Activated CD4-positive, alpha-beta T cell treated with anti-CD3 and anti-CD28 coated beads for 36 hours (primary cell): ENCODE measurements at regions of chrX and their contacts with region 1.

Region 1: GRCh38 chrX:21374163-21374993 is at the start of gene CNKSR2:
- DNase-seq: peak; percentile 83
- ATAC-seq: peak; percentile 81
- H3K4me3 Mint-ChIP-seq: peak within 1 kb of the TSS; percentile 87
- H3K27ac Mint-ChIP-seq: peak within 1 kb of the TSS; percentile 74
- H3K4me1 Mint-ChIP-seq: peaks cover 31% of the 10 kb centered on the region
- H3K27me3 Mint-ChIP-seq: no peaks in the 10 kb centered on the region
- total RNA-seq, gene CNKSR2: 6.2 to 7.3 TPM

Region 2: DNA sequence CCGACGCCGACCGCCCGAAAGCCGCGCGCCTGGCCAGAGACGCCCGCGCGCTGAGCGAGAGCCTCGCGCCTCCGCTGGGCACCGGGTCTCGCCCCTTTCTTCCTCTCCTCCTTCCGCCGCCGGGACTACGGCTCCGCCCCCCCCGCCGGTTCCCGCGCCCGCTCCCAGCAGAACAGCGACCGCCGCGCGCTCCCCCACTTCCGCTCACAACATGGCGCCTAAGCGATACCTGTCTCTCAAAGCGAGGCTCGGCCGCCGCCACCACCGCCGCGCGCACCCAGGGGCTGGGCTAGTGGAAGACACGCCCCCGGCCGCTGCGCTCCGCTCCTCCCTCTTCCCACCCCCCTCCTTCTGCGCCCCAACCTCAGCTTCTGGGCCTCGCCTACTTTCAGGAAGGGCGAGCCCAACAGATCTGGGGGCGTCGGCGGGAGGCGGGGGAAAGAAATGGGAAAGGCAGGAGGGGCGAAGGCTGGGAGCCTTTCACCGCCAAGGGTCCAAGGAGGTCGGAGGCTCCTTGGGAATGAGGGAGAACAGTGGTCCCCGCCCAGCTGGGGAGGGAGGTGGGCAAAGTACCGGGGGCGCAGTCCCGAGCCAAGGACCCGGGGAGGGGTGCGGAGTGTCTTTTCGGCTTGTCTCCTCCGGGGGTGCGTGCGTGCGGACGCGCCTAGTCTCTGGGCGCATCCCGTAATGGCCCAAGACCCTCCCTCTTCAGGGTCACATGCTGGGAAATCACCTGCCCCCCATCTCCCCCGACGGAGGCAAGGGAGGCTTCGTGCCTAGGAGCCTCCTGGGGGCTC is 1107.4 kb before region 1 on chrX and contains the start of gene RPS6KA3:
- CTCF ChIA-PET with region 1: no interaction called
- POLR2A ChIA-PET with region 1: no interaction called
- intact Hi-C with region 1: loop called (anchors 10 kb)
- DNase-seq: peak; percentile 94
- ATAC-seq: peak; percentile 83
- H3K4me3 Mint-ChIP-seq: peak within 1 kb of the TSS; percentile 82
- H3K27ac Mint-ChIP-seq: peak within 1 kb of the TSS; percentile 91
- H3K4me1 Mint-ChIP-seq: peaks cover 18% of the 10 kb centered on the region
- H3K27me3 Mint-ChIP-seq: no peaks in the 10 kb centered on the region
- total RNA-seq, gene RPS6KA3: 40.7 to 41.5 TPM

Region 3: DNA sequence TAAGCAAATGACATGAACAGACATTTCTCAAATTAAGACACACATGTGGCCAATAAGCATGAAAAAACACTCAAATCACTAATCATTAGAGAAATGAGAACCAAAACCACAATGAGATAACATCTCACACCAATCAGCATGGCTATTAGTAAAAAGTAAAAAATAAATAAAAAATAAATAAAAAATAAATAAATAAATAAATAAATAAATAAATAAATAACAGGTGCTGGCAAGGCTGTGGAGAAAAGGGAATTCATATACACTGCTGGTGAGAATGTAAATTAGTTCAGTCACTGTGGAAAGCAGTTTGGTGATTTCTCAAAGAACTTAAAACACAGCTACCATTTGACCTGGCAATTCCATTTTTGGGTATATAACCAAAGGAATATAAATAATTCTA is 167.3 kb before region 1 on chrX:
- CTCF ChIA-PET with region 1: no interaction called
- POLR2A ChIA-PET with region 1: no interaction called
- intact Hi-C with region 1: no loop called
- DNase-seq: no peak
- ATAC-seq: no peak
- H3K4me3 Mint-ChIP-seq: no peak overlapping the region
- H3K27ac Mint-ChIP-seq: no peak overlapping the region
- H3K4me1 Mint-ChIP-seq: no peaks in the 10 kb centered on the region
- H3K27me3 Mint-ChIP-seq: no peaks in the 10 kb centered on the region

Region 4: DNA sequence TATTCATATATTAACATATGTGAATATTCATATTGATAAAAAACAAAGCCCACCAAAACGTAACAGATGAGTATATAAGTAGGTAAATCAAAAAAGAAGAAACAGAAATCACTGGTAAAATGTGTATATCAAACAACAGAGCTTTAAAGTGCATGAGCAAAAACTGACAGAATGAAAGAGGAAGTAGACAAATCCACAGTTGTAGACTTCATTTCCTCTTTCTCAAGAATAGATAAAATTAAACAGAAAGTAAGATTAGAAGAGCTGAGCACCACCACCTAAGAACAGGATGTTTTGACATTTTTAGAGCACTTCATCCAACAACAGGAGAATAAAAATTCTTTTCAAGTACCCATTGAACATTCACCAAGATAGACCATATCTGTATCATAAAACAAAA is 64.4 kb after region 1 on chrX:
- CTCF ChIA-PET with region 1: no interaction called
- POLR2A ChIA-PET with region 1: no interaction called
- intact Hi-C with region 1: loop called (anchors 1 to 10 kb)
- DNase-seq: no peak
- ATAC-seq: peak; percentile 78
- H3K4me3 Mint-ChIP-seq: peak overlapping the region; percentile 60
- H3K27ac Mint-ChIP-seq: peak overlapping the region; percentile 89
- H3K4me1 Mint-ChIP-seq: peaks cover 15% of the 10 kb centered on the region
- H3K27me3 Mint-ChIP-seq: no peaks in the 10 kb centered on the region

Region 5: DNA sequence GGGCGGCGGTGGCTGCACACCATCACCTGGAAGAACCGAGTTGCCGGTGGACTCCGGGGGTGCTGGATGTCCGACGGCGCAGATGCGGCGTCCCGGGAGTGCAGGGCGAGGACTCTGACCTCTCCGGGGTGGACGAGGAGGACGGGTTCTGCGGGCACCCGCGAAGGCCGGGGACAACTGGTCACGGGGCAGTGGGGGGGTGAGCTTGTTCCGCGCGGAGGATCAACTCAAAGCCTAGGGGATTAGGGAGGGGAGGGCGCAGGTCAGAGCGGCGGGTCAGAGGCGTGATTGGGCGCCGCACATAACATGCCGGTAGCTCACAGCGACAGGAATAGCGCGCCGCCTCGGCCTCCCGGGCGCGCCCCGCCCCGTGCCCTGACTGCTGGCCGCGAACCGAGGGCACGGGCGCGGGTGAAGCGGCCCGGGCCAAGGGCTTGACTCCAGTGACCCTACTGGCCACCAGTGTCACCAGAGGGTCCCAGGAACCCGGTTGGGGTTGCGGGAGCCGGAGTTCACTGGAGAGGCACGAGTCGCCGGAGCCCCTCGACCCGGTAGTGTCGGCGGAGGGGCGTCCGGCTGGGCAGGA is 283.9 kb after region 1 on chrX and contains the start of gene KLHL34:
- CTCF ChIA-PET with region 1: no interaction called
- POLR2A ChIA-PET with region 1: no interaction called
- intact Hi-C with region 1: loop called in 1 of 2 experiments (anchors 10 kb)
- DNase-seq: peak; percentile 29
- ATAC-seq: peak; percentile 61
- H3K4me3 Mint-ChIP-seq: peak within 1 kb of the TSS; percentile 66
- H3K27ac Mint-ChIP-seq: peak within 1 kb of the TSS; percentile 51
- H3K4me1 Mint-ChIP-seq: peaks cover 5% of the 10 kb centered on the region
- H3K27me3 Mint-ChIP-seq: peaks cover 4% of the 10 kb centered on the region
- total RNA-seq, gene KLHL34: 0.60 to 0.94 TPM

Region 6: DNA sequence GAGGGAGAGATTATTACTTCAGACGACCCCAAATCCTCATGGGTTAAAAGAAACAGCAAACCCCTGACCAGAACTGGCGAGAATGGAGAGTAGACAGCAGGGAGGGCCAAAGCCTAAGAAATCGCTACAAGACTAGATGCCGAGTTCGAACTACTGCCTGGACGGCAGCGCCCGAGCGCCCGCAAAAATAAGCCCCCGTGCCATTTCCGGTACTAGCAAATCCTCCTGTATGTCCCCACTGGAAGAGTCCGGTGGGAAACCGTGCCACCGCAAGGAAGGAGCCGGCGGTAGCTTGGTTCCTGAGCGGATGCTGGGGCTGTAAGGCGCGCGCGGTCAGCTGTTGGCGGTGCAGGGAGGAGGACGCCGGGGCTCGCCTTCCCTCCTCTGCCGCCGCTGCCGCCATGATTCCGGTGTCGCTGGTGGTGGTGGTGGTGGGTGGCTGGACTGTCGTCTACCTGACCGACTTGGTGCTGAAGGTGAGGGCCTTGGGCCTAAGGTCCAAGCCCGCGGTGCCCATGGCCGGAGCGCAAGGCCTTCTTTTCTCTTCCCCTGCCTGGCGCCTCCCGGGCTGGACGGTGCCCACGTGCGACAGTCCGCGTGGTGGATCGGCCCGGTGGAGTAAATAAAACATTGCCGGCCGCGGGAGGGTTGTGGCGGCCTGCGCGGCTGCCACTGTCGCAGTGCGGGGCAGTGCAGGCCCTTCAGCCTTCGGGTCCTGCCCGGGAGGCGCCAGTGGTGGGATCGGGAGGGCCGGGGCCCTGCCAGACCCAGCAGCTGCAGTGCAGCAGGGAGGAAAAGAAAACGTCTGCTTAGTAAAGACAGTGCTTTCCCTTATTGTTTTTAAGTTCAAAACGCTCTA is 465.2 kb after region 1 on chrX and contains the start of gene MBTPS2:
- CTCF ChIA-PET with region 1: no interaction called
- POLR2A ChIA-PET with region 1: no interaction called
- intact Hi-C with region 1: loop called in 1 of 2 experiments (anchors 10 kb)
- DNase-seq: peak; percentile 90
- ATAC-seq: peak; percentile 87
- H3K4me3 Mint-ChIP-seq: peak within 1 kb of the TSS; percentile 84
- H3K27ac Mint-ChIP-seq: peak within 1 kb of the TSS; percentile 92
- H3K4me1 Mint-ChIP-seq: peaks cover 11% of the 10 kb centered on the region
- H3K27me3 Mint-ChIP-seq: no peaks in the 10 kb centered on the region
- total RNA-seq, gene MBTPS2: 6.9 to 7.8 TPM